ENCODE measurements at regions of chr20 and their contacts with region 1.

Region 1: GRCh38 chr20:51695574-51696303 is 72.5 kb downstream of the ATP9A start:
- DNase-seq: no peak
- ATAC-seq: peak; percentile 78
- H3K4me3 ChIP-seq: 0 out of 4 replicates have a peak overlapping the region, but pooled peaks of 1 of the 2 experiments have one; percentile 6
- H3K27ac ChIP-seq: peak overlapping the region; percentile 67; the same call in 1 of the 2 replicates
- H3K4me1 ChIP-seq: peaks cover 19% of the 10 kb centered on the region
- H3K27me3 ChIP-seq: no peaks in the 10 kb centered on the region
- CTCF ChIP-seq: no peak

Region 2: DNA sequence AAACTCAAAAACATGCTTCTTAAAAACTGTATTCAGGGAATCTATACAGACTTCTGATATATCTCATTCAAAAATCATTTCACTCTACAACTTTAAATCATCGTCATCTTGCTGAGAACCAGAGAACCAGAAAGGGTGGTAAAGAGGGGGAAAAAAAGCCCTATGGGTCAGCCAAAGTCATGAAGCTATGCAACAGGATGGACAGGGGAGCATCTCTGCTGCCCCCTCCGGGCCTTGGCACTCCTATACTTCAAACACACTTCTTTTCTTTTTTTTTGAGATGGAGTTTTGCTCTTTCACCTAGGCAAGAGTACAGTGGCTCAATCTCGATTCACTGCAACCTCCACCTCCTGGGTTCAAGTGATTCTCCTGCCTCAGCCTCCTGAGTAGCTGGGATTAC is 79.7 kb before region 1 on chr20:
- CTCF ChIA-PET with region 1: interaction called, 10 read pairs
- POLR2A ChIA-PET with region 1: no interaction called
- in situ Hi-C with region 1: no loop called
- intact Hi-C with region 1: no loop called
- DNase-seq: no peak
- ATAC-seq: no peak
- H3K4me3 ChIP-seq: no peak overlapping the region
- H3K27ac ChIP-seq: no peak overlapping the region
- H3K4me1 ChIP-seq: no peaks in the 10 kb centered on the region
- H3K27me3 ChIP-seq: no peaks in the 10 kb centered on the region
- CTCF ChIP-seq: no peak; the same call in 1 of the 2 replicates

Region 3: DNA sequence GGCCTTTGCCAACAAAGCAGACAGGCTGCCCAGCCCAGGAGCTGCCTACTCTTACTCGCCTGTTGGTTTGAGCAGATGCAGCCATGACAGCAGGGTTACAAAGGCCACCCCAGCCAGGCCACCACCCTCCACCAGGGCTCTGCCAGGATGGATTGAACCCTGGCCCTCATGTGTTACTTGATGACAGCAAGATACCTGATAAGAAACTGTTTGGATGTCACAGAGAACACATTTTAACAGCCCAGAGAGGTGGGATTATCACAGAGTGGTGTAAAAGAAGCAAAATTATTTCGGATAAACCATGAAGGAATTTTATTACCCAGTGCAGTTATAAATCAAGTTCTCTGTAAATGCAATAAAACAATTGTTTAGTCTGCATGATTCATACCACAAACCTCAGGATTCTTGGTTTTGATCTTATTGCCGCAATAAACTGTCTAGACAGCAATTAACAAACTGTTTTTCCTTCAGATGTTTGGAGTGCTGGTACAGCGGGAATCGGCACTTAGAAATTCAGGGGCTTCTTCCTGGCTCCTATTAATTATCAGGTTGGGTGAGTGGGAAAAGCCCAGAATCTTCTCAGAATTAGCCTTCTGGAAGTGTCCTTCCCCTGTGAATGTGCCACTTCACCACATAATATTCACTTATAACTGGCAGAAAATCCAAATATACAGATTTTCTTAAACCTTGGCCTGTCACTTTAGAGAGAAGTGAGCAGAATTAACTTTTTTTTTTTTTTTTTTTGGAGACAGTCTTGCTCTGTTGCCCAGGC is 164.6 kb after region 1 on chr20:
- CTCF ChIA-PET with region 1: no interaction called
- POLR2A ChIA-PET with region 1: no interaction called
- in situ Hi-C with region 1: no loop called
- intact Hi-C with region 1: no loop called
- DNase-seq: no peak
- ATAC-seq: peak; percentile 63; the same call in 1 of the 2 replicates
- H3K4me3 ChIP-seq: no peak overlapping the region
- H3K27ac ChIP-seq: no peak overlapping the region
- H3K4me1 ChIP-seq: no peaks in the 10 kb centered on the region
- H3K27me3 ChIP-seq: no peaks in the 10 kb centered on the region
- CTCF ChIP-seq: no peak

Region 4: DNA sequence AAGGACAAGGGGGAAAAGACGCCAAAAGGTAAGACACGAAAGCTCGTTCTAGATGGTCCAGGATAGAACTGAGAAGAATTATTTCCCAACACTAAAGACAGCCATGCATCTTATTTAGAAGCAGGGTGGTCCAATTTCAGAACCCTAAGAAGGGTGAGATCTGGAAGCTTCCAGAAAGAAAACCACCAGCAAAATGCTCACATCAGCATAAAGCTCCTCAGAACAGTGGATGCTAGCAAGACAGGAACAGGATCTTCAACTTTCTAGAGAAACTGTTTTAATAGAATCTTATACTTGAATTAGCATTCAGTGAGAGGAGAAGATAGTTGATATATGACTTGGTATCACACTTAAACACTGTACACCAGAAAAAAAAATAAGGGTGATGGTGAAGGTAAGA is 394.3 kb after region 1 on chr20:
- CTCF ChIA-PET with region 1: interaction called, 11 read pairs
- POLR2A ChIA-PET with region 1: no interaction called
- in situ Hi-C with region 1: no loop called
- intact Hi-C with region 1: no loop called
- DNase-seq: no peak
- ATAC-seq: no peak
- H3K4me3 ChIP-seq: no peak overlapping the region
- H3K27ac ChIP-seq: no peak overlapping the region
- H3K4me1 ChIP-seq: no peaks in the 10 kb centered on the region
- H3K27me3 ChIP-seq: no peaks in the 10 kb centered on the region
- CTCF ChIP-seq: no peak